ENCODE measurements at regions of chr1 and their contacts with region 1.

Region 1: DNA sequence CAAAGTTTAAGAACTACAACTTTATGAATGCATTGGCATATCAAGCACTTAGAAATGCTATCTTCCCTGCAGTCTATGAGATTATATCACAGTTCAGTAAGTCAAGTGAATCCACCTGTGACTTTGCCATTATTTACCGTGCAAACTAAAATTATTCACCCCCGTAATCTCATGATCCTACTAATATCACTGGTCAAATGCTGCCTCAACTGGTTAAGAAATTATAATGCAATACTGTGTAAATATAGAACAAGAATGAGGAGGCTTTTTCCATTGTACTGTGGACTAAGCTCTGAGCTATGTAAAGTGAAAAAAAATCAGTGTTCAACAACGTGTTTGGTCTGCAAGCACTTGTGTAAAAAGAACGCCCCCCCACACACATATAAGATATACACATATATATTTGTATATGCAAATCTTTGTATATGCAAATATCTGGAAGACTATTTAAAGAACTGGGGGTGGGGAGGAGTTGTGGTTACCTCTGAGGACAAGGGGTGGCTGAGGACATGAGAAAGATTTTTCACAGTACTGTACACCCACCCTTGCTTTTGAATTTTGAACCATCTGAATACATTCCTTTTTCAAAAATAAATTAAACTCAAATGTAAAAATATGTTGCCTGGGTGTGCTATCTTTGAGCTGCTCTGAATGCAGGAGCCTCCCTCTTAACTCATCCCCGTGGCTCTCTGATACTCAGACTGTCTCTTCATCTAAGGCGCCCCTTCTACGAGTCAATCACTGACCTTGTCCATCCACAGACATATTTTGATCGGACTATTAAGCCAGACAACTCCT is 57.1 kb downstream of the PTP4A2 start:
- DNase-seq: no peak
- H3K4me3 ChIP-seq: no peak overlapping the region
- H3K4me3 Mint-ChIP-seq: peak overlapping the region; percentile 65
- H3K27ac Mint-ChIP-seq: peak overlapping the region; percentile 78
- H3K4me1 ChIP-seq: peaks cover 15% of the 10 kb centered on the region
- H3K4me1 Mint-ChIP-seq: peaks cover 17% of the 10 kb centered on the region
- H3K27me3 ChIP-seq: no peaks in the 10 kb centered on the region
- H3K27me3 Mint-ChIP-seq: no peaks in the 10 kb centered on the region
- CTCF ChIP-seq: no peak

Region 2: DNA sequence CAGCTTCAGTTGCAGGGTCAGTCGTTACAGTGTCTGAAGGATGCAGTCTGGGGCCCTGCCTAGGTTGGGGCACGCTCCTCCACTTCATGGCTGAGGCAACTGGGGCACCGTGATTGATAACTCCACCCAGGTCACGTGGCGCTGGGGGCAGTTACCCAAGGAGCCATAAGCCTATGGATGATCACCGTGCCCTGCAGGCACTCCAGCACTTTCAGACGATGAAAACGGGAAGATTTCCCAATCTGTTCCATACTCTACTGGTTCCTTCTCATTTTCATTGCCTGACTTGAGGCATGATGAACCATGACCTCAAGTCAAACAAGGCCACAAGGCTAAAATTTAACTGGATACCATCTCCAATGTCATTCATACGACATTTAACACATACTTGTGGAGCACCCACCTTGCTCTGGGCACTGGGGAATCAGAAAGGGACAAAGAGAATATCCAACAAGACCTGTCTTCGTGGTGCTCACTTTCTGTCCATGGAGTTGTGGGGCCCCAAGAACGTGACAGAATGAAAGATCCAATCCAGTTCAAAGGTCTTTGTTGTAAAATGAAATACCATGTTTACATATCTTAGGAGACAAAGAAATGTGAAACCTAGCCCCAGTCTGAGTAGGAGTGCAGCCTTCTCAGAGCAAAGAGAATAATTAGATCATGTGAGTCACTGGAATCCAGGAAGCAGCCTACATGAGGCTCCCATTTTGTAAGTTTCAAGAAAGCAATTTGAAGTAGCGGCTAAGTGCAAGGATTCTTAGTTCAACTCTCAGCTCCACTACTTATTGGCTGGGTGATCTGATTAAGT is 25.8 kb before region 1 on chr1:
- CTCF ChIA-PET with region 1: no interaction called
- POLR2A ChIA-PET with region 1: no interaction called
- intact Hi-C with region 1: loop called (anchors 1 kb)
- DNase-seq: peak; percentile 68 to 75
- H3K4me3 ChIP-seq: no peak overlapping the region
- H3K4me3 Mint-ChIP-seq: no peak overlapping the region
- H3K27ac Mint-ChIP-seq: no peak overlapping the region
- H3K4me1 ChIP-seq: peaks cover 18% of the 10 kb centered on the region
- H3K4me1 Mint-ChIP-seq: no peaks in the 10 kb centered on the region
- H3K27me3 ChIP-seq: no peaks in the 10 kb centered on the region
- H3K27me3 Mint-ChIP-seq: no peaks in the 10 kb centered on the region
- CTCF ChIP-seq: no peak

Region 3: GRCh38 chr1:32005522-32005921 is 124.4 kb after region 1 on chr1:
- CTCF ChIA-PET with region 1: no interaction called
- POLR2A ChIA-PET with region 1: no interaction called
- intact Hi-C with region 1: no loop called
- DNase-seq: no peak
- H3K4me3 ChIP-seq: no peak overlapping the region
- H3K4me3 Mint-ChIP-seq: no peak overlapping the region
- H3K27ac Mint-ChIP-seq: no peak overlapping the region
- H3K4me1 ChIP-seq: no peaks in the 10 kb centered on the region
- H3K4me1 Mint-ChIP-seq: no peaks in the 10 kb centered on the region
- H3K27me3 ChIP-seq: no peaks in the 10 kb centered on the region
- H3K27me3 Mint-ChIP-seq: no peaks in the 10 kb centered on the region
- CTCF ChIP-seq: no peak

Measured in Caco-2 (cell line).